ENCODE measurements at regions of chr14 and their contacts with region 1.

Region 1: DNA sequence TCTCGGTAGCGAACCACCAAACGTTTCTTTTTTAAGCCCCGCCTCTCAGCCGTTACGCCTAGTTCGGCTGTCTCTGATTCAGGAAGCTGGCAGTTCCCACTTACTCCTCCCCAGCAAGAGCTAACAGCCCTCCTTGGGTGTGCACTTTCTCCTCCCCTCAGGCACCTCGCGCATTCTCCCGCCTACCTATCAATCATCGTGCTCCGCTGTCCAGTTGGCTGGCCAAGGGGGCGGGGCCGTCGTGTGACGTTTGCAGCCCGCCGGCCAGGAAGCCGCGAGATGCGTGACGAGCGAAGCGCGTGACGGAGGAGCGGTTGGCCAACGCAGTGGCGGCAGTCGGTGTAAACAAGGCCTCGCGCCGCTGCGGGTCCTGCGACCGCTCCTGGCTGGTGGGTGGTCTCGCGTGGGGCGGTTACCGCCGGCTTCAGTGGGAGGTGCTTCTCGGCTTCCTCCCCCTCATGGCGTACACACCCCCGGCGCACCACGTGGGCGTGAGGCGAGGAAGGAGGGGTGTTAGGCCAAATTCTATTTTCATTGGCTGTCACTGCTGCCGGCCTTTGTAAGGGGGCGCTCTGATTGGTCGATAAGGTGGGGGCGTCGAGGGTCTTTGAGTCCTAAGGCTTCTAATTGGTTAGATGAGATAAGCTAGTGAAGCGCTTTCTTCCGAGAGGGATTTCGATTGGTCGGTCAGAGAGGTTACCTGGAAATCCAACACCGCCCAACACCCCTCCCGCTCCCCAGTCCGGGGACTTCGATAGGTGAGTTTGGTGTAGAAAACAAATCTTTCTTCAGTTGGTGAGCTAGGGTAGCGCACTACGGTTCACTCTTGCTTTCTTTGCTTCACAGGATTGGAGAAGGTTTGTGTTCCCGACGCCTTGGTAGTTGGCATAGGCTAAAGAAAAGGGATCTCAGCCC is at the starts of genes DCAF11 and NRL:
- DNase-seq: peak; percentile 97
- ATAC-seq: peak; percentile 83
- H3K4me3 Mint-ChIP-seq: peak within 1 kb of the TSS; percentile 99
- H3K27ac Mint-ChIP-seq: peak within 1 kb of the TSS; percentile 100
- H3K4me1 Mint-ChIP-seq: peaks cover 27% of the 10 kb centered on the region
- H3K27me3 Mint-ChIP-seq: no peaks in the 10 kb centered on the region
- CTCF ChIP-seq: no peak
- total RNA-seq, gene DCAF11: 84.3 and 86.5 TPM in 2 replicates
- total RNA-seq, gene NRL: 5.4 and 5.5 TPM in 2 replicates

Region 2: GRCh38 chr14:24051789-24052655 is 62.8 kb before region 1 on chr14 and contains the start of gene CARMIL3:
- CTCF ChIA-PET with region 1: interaction called, 4 read pairs
- POLR2A ChIA-PET with region 1: interaction called, 14 read pairs
- intact Hi-C with region 1: no loop called
- DNase-seq: peak; percentile 69
- ATAC-seq: peak; percentile 86
- H3K4me3 Mint-ChIP-seq: peak within 1 kb of the TSS; percentile 82
- H3K27ac Mint-ChIP-seq: peak within 1 kb of the TSS; percentile 71
- H3K4me1 Mint-ChIP-seq: peaks cover 34% of the 10 kb centered on the region
- H3K27me3 Mint-ChIP-seq: peaks cover 6% of the 10 kb centered on the region
- CTCF ChIP-seq: no peak
- total RNA-seq, gene CARMIL3: 3.5 and 3.9 TPM in 2 replicates

Region 3: GRCh38 chr14:24093901-24094761 is 20.7 kb before region 1 on chr14 and contains the start of gene PCK2:
- CTCF ChIA-PET with region 1: interaction called, 10 read pairs
- POLR2A ChIA-PET with region 1: interaction called, 138 read pairs
- intact Hi-C with region 1: loop called (anchors 1 kb)
- DNase-seq: peak; percentile 76
- ATAC-seq: peak; percentile 69
- H3K4me3 Mint-ChIP-seq: peak within 1 kb of the TSS; percentile 99
- H3K27ac Mint-ChIP-seq: peak within 1 kb of the TSS; percentile 99
- H3K4me1 Mint-ChIP-seq: peaks cover 31% of the 10 kb centered on the region
- H3K27me3 Mint-ChIP-seq: no peaks in the 10 kb centered on the region
- CTCF ChIP-seq: no peak
- total RNA-seq, gene PCK2: 82.1 and 102 TPM in 2 replicates

Region 4: GRCh38 chr14:24146978-24147760 is 32.4 kb after region 1 on chr14 and contains the start of gene RNF31:
- CTCF ChIA-PET with region 1: interaction called, 28 read pairs
- POLR2A ChIA-PET with region 1: interaction called, 83 read pairs
- intact Hi-C with region 1: loop called (anchors 1 kb)
- DNase-seq: peak; percentile 91
- ATAC-seq: peak; percentile 85
- H3K4me3 Mint-ChIP-seq: peak within 1 kb of the TSS; percentile 97
- H3K27ac Mint-ChIP-seq: peak within 1 kb of the TSS; percentile 94
- H3K4me1 Mint-ChIP-seq: peaks cover 51% of the 10 kb centered on the region
- H3K27me3 Mint-ChIP-seq: no peaks in the 10 kb centered on the region
- CTCF ChIP-seq: no peak
- total RNA-seq, gene RNF31: 87.4 and 99.8 TPM in 2 replicates

Region 5: GRCh38 chr14:24188251-24189058 is 73.7 kb after region 1 on chr14 and contains the start of gene IPO4:
- CTCF ChIA-PET with region 1: no interaction called
- POLR2A ChIA-PET with region 1: interaction called, 10 read pairs
- intact Hi-C with region 1: loop called (anchors 1 kb)
- DNase-seq: peak; percentile 81
- ATAC-seq: peak; percentile 92
- H3K4me3 Mint-ChIP-seq: peak within 1 kb of the TSS; percentile 91
- H3K27ac Mint-ChIP-seq: peak within 1 kb of the TSS; percentile 87
- H3K4me1 Mint-ChIP-seq: peaks cover 32% of the 10 kb centered on the region
- H3K27me3 Mint-ChIP-seq: no peaks in the 10 kb centered on the region
- CTCF ChIP-seq: no peak
- total RNA-seq, gene IPO4: 76.4 and 80.3 TPM in 2 replicates

Region 6: GRCh38 chr14:24232121-24232644 is 117.4 kb after region 1 on chr14 and contains the start of gene NEDD8:
- CTCF ChIA-PET with region 1: no interaction called
- POLR2A ChIA-PET with region 1: no interaction called
- intact Hi-C with region 1: loop called (anchors 1 kb)
- DNase-seq: no peak
- ATAC-seq: peak; percentile 88
- H3K4me3 Mint-ChIP-seq: peak within 1 kb of the TSS; percentile 99
- H3K27ac Mint-ChIP-seq: peak within 1 kb of the TSS; percentile 94
- H3K4me1 Mint-ChIP-seq: peaks cover 43% of the 10 kb centered on the region
- H3K27me3 Mint-ChIP-seq: no peaks in the 10 kb centered on the region
- CTCF ChIP-seq: no peak
- total RNA-seq, gene NEDD8: 129 and 149 TPM in 2 replicates

Region 7: GRCh38 chr14:24310646-24311604 is 196.1 kb after region 1 on chr14 and contains the start of gene LTB4R:
- CTCF ChIA-PET with region 1: interaction called, 9 read pairs
- POLR2A ChIA-PET with region 1: interaction called, 5 read pairs
- intact Hi-C with region 1: loop called (anchors 2 kb)
- DNase-seq: peak; percentile 73
- ATAC-seq: peak; percentile 78
- H3K4me3 Mint-ChIP-seq: peak within 1 kb of the TSS; percentile 75
- H3K27ac Mint-ChIP-seq: peak within 1 kb of the TSS; percentile 80
- H3K4me1 Mint-ChIP-seq: peaks cover 59% of the 10 kb centered on the region
- H3K27me3 Mint-ChIP-seq: no peaks in the 10 kb centered on the region
- CTCF ChIP-seq: no peak
- total RNA-seq, gene LTB4R: 8.2 and 8.6 TPM in 2 replicates